Kidney (tissue), 22 donors: ENCODE measurements at regions of chr12 and their contacts with region 1.

Region 1: DNA sequence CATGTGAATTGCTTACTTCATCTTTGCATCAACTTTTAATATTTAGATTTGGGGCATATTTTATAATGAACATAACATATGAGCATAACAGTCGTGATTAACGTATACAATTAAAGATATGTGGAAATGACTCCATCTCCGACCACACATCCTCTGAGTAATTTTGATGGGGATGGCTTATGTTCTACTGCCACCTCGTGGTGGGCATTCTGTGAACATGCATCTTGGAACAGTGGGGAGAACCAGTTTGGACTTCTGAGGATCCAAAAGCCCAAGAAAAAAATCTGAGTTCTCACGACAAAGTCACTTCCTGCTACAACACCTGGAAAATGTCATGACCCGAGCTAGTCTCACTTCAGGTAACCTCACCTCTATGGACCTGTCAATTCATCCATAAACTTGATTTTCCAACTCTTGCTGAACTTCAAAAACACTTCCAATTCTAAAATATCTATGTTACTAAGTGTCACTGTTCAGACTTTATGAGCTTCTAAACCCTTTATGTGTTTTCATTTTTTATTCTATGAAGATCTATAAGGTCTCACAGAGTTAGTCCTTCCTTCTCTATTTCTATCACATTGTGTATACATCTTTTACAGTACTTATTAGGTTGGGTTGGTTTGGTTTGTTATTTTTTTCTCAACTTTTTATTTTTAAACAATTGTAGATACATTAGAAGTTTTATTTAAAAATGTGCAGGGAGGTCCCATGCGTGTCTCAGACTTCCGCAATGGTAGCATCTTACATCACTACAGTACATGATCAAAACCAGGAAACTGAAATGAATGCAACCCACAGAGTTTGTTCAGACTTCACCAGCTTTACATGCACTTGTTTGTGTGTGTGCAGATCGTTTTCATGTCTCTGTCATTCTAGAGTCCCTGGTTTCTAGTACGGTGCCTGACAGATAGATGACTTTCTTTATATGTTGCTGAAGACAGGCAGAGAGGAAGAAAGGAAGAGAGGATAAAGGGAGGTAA is 38.2 kb upstream of the STAB2 start:
- DNase-seq: peak in 4 of 5 donors; percentile 63 to 84 (median 78)
- H3K4me3 ChIP-seq: no peak overlapping the region
- H3K27ac ChIP-seq: no peak overlapping the region
- H3K4me1 ChIP-seq: no peaks in the 10 kb centered on the region
- H3K27me3 ChIP-seq: no peaks in the 10 kb centered on the region
- CTCF ChIP-seq: peak; percentile 80

Region 2: GRCh38 chr12:102883204-102883799 is 665.6 kb before region 1 on chr12:
- intact Hi-C with region 1: loop called (anchors 10 kb)
- DNase-seq: peak in 4 of 5 donors; percentile 64 to 76 (median 74)
- H3K4me3 ChIP-seq: no peak overlapping the region
- H3K27ac ChIP-seq: no peak overlapping the region
- H3K4me1 ChIP-seq: peaks cover 0 to 11% (median 5%) of the 10 kb centered on the region in 3 donors
- H3K27me3 ChIP-seq: no peaks in the 10 kb centered on the region
- CTCF ChIP-seq: peak; percentile 84

Region 3: GRCh38 chr12:102958073-102958829 is 590.7 kb before region 1 on chr12:
- intact Hi-C with region 1: loop called (anchors 10 kb)
- DNase-seq: peak in 4 of 5 donors; percentile 71 to 74 (median 72)
- H3K4me3 ChIP-seq: peak overlapping the region in 1 of 3 donors; percentile 25
- H3K27ac ChIP-seq: no peak overlapping the region
- H3K4me1 ChIP-seq: peaks cover 0 to 5% (median 0%) of the 10 kb centered on the region in 3 donors
- H3K27me3 ChIP-seq: peaks cover 75% of the 10 kb centered on the region
- CTCF ChIP-seq: no peak